ENCODE measurements at regions of chr5 and their contacts with region 1.

Region 1: DNA sequence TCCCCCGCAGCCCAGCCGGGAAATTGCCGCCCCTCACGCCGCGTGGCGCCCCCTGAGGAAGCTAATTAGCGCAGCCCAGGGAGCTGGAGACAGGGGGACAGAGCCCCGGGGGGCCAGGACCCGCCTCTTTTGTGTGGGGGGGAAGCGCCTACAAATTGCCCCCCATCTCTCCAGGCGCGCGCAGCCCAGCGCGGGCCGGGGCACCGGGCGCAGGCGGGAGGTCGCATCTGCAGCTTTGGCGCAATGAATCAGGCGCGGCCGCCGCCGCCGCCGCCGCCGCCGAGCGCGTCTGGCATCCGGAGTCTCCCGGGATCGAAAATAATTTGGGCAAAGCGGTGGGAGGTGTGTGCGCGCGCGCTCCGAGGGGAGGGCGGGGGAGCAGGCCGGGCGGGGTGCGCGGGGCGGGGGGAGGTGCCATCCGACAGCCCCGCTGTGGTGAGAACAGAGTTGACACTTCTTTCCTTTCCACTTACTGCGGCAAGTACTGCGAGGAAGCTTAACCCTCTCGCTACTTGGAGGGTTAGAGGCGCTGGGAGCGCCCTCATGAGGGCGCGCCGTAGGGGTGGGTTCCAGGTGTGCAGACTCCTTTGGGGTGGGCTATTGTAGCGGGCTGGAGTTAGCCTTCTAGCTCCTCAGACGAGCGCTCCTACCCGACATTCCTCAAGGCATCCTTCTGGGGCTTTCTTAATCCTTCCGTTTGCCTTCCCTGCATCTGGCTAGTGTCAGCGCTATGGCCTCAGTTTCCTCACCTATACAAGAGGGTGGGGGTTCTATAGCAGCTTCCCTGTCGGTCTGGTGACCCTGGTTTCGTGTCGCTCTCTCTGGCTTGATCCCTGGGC is 63.1 kb downstream of the CXXC5 start:
- DNase-seq: peak; percentile 62 to 83 (median 67)
- H3K4me3 ChIP-seq: peak overlapping the region; percentile 78
- H3K4me3 Mint-ChIP-seq: peak overlapping the region; percentile 77 to 90 (median 79)
- H3K27ac ChIP-seq: peak overlapping the region; percentile 76
- H3K27ac Mint-ChIP-seq: peak overlapping the region; percentile 67 to 97 (median 94)
- H3K4me1 ChIP-seq: peaks cover 32% of the 10 kb centered on the region
- H3K4me1 Mint-ChIP-seq: peaks cover 26 to 50% (median 30%) of the 10 kb centered on the region in 3 donors
- H3K27me3 ChIP-seq: no peaks in the 10 kb centered on the region
- H3K27me3 Mint-ChIP-seq: no peaks in the 10 kb centered on the region

Region 2: DNA sequence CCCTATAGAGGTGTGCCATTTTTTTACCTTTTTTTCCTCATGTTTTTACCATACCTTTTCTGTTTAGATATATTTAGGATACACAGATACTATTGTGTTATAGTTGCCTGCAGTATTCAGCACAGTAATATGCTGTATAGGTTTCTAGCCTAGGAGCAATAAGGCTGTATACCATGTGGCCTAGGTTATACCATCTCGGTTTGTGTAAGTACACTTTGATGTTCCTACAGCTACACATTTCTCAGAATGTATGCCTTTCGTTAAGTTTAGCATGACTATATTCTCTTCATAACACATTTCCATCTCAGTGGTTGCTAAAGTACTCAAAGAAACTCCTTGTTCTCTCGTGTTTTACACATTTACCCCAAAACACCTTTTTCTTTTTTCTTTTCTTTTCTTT is 127.1 kb before region 1 on chr5:
- CTCF ChIA-PET with region 1: no interaction called
- POLR2A ChIA-PET with region 1: no interaction called
- DNase-seq: no peak
- H3K4me3 ChIP-seq: no peak overlapping the region
- H3K4me3 Mint-ChIP-seq: peak overlapping the region in 3 of 7 donors; percentile 15 to 65 (median 19)
- H3K27ac ChIP-seq: no peak overlapping the region
- H3K27ac Mint-ChIP-seq: peak overlapping the region in 2 of 8 donors; percentile 56 to 58
- H3K4me1 ChIP-seq: peaks cover 40% of the 10 kb centered on the region
- H3K4me1 Mint-ChIP-seq: peaks cover 37 to 80% (median 60%) of the 10 kb centered on the region in 3 donors
- H3K27me3 ChIP-seq: no peaks in the 10 kb centered on the region
- H3K27me3 Mint-ChIP-seq: no peaks in the 10 kb centered on the region

Region 3: GRCh38 chr5:139633295-139634027 is 77.8 kb before region 1 on chr5:
- CTCF ChIA-PET with region 1: interaction called, 26 read pairs
- POLR2A ChIA-PET with region 1: interaction called, 11 read pairs
- DNase-seq: peak; percentile 56 to 73 (median 63)
- H3K4me3 ChIP-seq: no peak overlapping the region
- H3K4me3 Mint-ChIP-seq: peak overlapping the region in 2 of 7 donors; percentile 1 to 2
- H3K27ac ChIP-seq: no peak overlapping the region
- H3K27ac Mint-ChIP-seq: peak overlapping the region in 7 of 8 donors; percentile 6 to 83 (median 68)
- H3K4me1 ChIP-seq: peaks cover 35% of the 10 kb centered on the region
- H3K4me1 Mint-ChIP-seq: peaks cover 36 to 47% (median 43%) of the 10 kb centered on the region in 3 donors
- H3K27me3 ChIP-seq: no peaks in the 10 kb centered on the region
- H3K27me3 Mint-ChIP-seq: no peaks in the 10 kb centered on the region

Region 4: GRCh38 chr5:139670369-139671095 is 40.8 kb before region 1 on chr5:
- CTCF ChIA-PET with region 1: interaction called, 12 read pairs
- POLR2A ChIA-PET with region 1: interaction called, 12 read pairs
- DNase-seq: peak in 1 of 5 donors; percentile 62
- H3K4me3 ChIP-seq: peak overlapping the region; percentile 66
- H3K4me3 Mint-ChIP-seq: peak overlapping the region; percentile 86 to 94 (median 91)
- H3K27ac ChIP-seq: peak overlapping the region; percentile 66
- H3K27ac Mint-ChIP-seq: peak overlapping the region; percentile 91 to 99 (median 96)
- H3K4me1 ChIP-seq: peaks cover 46% of the 10 kb centered on the region
- H3K4me1 Mint-ChIP-seq: peaks cover 54 to 57% (median 55%) of the 10 kb centered on the region in 3 donors
- H3K27me3 ChIP-seq: no peaks in the 10 kb centered on the region
- H3K27me3 Mint-ChIP-seq: no peaks in the 10 kb centered on the region

Region 5: DNA sequence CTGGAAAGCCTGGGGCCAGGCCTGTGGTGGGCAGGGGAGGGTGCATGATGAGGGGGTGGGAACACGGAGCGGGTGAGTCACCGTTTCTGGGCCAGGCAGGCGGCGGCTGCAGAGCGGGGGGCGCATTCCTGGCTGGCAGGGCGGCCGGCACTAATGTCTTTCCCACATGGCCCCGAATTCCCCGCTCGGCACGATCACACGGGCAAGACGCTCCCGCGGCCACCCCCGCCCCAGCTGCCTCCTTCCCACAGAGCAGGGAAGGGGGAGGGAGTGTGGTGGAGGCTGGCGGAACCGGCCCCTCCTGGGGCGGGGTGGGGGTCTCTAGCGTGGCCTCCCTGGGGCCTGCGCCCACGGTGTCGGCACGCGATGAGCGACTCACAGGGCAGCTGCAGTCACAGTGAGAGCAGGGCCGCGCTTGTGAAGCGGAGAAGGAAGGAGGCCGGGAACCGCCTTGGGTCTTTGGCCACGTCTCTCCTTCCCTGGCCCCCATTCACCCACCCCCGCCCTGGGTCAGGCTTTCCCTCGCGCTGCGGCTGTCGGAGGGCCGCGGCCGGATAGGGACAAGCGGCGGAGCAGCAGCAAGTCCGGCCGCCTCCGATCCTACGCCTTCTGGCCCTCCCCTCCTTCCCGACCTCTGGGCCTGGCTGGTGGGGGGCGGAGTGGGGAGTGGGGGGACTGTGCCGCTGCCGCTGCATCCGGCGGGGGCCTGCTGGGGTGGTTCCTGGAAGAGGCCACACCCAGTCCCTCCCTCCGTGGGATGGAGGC is 14.2 kb before region 1 on chr5:
- CTCF ChIA-PET with region 1: interaction called, 19 read pairs
- POLR2A ChIA-PET with region 1: interaction called, 15 read pairs
- DNase-seq: peak in 2 of 5 donors; percentile 6 to 11
- H3K4me3 ChIP-seq: peak overlapping the region; percentile 26
- H3K4me3 Mint-ChIP-seq: peak overlapping the region; percentile 39 to 81 (median 73)
- H3K27ac ChIP-seq: peak overlapping the region; percentile 64
- H3K27ac Mint-ChIP-seq: peak overlapping the region in 4 of 8 donors; percentile 39 to 88 (median 67)
- H3K4me1 ChIP-seq: peaks cover 18% of the 10 kb centered on the region
- H3K4me1 Mint-ChIP-seq: peaks cover 22 to 47% (median 29%) of the 10 kb centered on the region in 3 donors
- H3K27me3 ChIP-seq: peaks cover 7% of the 10 kb centered on the region
- H3K27me3 Mint-ChIP-seq: peaks cover 13 to 14% of the 10 kb centered on the region in 2 donors

Region 6: DNA sequence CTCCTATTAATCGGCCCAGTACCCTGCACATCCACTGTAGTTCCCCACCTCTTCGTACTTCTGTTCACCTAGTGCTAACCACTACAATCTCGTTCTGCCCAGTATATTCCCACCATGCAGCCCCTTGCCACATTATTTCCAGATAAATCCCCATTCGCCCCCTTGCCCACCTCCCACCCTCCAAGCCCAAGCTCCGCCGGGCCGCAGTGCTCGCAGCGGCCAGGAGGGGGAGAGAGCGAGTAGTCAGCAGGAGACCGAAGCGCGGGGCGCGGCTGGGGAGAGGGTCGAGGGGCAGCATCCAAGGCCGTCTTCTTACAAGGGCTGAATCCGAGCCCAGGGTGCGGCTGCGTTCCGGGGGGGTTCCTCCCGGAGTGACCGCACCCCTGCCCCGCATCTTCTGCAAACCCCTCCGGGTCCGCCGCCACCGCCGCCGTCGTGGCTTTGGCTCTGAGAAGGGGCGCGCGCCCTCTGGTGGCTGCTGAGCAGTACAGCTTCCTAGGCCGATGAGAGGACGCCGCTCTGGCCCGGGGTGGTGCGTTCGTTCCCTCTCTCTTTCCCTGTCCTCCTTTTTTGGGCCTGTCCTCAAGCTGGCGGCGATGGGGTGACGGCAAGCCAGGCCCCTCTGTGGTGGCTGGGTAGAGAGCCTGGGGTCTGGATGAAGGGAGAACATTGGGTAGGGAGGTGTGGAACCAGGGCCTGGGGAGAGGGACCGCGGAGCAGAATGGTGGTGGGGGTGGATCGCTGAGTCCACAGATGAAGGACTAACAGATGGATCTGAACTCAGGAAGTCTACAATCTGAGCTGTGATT is 54.3 kb after region 1 on chr5:
- CTCF ChIA-PET with region 1: interaction called, 19 read pairs
- POLR2A ChIA-PET with region 1: interaction called, 11 read pairs
- DNase-seq: peak; percentile 76 to 86 (median 82)
- H3K4me3 ChIP-seq: peak overlapping the region; percentile 47
- H3K4me3 Mint-ChIP-seq: peak overlapping the region; percentile 20 to 80 (median 68)
- H3K27ac ChIP-seq: no peak overlapping the region
- H3K27ac Mint-ChIP-seq: peak overlapping the region in 6 of 8 donors; percentile 17 to 67 (median 52)
- H3K4me1 ChIP-seq: peaks cover 5% of the 10 kb centered on the region
- H3K4me1 Mint-ChIP-seq: peaks cover 11 to 18% (median 13%) of the 10 kb centered on the region in 3 donors
- H3K27me3 ChIP-seq: peaks cover 19% of the 10 kb centered on the region
- H3K27me3 Mint-ChIP-seq: peaks cover 18 to 26% of the 10 kb centered on the region in 2 donors

Measured in CD8-positive, alpha-beta memory T cell (primary cell).